ENCODE measurements at regions of chr2 and their contacts with region 1.

Region 1: GRCh38 chr2:198146541-198146940 is 342.1 kb downstream of the PLCL1 start:
- DNase-seq: no peak
- H3K4me3 ChIP-seq: no peak overlapping the region
- H3K27ac ChIP-seq: no peak overlapping the region
- H3K4me1 ChIP-seq: peaks cover 0 to 4% (median 2%) of the 10 kb centered on the region in 4 experiments
- H3K27me3 ChIP-seq: peaks cover 0 to 1% (median 0%) of the 10 kb centered on the region in 5 experiments

Region 2: GRCh38 chr2:197946562-197946961 is 200.0 kb before region 1 on chr2:
- CTCF ChIA-PET with region 1: no interaction called
- POLR2A ChIA-PET with region 1: no interaction called
- DNase-seq: no peak
- H3K4me3 ChIP-seq: no peak overlapping the region
- H3K27ac ChIP-seq: no peak overlapping the region
- H3K4me1 ChIP-seq: no peaks in the 10 kb centered on the region
- H3K27me3 ChIP-seq: peaks cover 0 to 9% (median 1%) of the 10 kb centered on the region in 5 experiments

Region 3: GRCh38 chr2:199329466-199329865 is 1182.9 kb after region 1 on chr2:
- CTCF ChIA-PET with region 1: no interaction called
- POLR2A ChIA-PET with region 1: interaction called, 10 read pairs
- DNase-seq: no peak
- H3K4me3 ChIP-seq: no peak overlapping the region
- H3K27ac ChIP-seq: no peak overlapping the region
- H3K4me1 ChIP-seq: no peaks in the 10 kb centered on the region
- H3K27me3 ChIP-seq: peaks cover 0 to 3% (median 0%) of the 10 kb centered on the region in 5 experiments

Measured in common myeloid progenitor, CD34-positive (primary cell).